BJ (cell line): ENCODE measurements at regions of chr1 and their contacts with region 1.

Region 1: GRCh38 chr1:19762175-19762779 is 37.4 kb downstream of the TMCO4 start:
- DNase-seq: no peak
- H3K4me3 ChIP-seq: no peak overlapping the region
- H3K27me3 ChIP-seq: no peaks in the 10 kb centered on the region
- CTCF ChIP-seq: peak; percentile 83

Region 2: GRCh38 chr1:19799230-19799876 is 37.1 kb after region 1 on chr1:
- CTCF ChIA-PET with region 1: interaction called, 11 read pairs
- POLR2A ChIA-PET with region 1: no interaction called
- DNase-seq: no peak
- H3K4me3 ChIP-seq: peak overlapping the region; percentile 54
- H3K27me3 ChIP-seq: no peaks in the 10 kb centered on the region
- CTCF ChIP-seq: peak; percentile 54

Region 3: GRCh38 chr1:19811206-19811851 is 49.1 kb after region 1 on chr1:
- CTCF ChIA-PET with region 1: interaction called, 14 read pairs
- POLR2A ChIA-PET with region 1: no interaction called
- DNase-seq: no peak
- H3K4me3 ChIP-seq: no peak overlapping the region
- H3K27me3 ChIP-seq: no peaks in the 10 kb centered on the region
- CTCF ChIP-seq: peak; percentile 62